KBM-7 (cell line): ENCODE measurements at regions of chr12 and their contacts with region 1.

Region 1: DNA sequence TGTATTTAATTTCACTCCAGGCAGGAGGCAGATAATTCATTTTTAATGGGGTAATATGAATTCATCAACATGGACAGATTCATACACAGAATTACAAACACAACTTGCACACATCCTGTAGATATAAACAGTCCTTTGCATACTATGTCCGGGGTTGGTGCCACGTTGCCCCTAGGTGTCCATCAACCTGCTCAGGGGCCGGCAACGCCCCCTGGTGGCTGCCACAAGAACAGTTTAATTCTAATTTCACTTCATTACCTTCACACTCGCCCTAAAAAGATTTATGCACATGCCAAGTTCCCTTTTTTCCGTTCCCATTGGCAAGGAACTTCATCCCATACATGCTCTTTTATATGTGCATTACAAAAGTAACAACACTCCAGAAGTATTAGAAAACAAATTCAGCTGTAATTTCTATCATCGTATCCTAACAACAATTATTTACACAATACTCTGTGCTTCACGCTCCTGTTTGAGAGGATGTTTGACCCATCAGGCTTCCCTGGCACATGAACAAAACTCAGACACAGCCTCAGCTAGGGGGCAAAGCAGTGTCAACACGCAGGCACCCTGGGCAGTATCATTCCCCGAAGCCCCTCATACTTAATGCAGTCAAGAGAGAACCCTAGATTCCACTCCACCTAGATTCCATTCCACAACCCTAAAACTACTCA is 15.5 kb downstream of the MANSC1 start:
- DNase-seq: peak; percentile 75

Region 2: GRCh38 chr12:11553871-11554533 is 780.5 kb before region 1 on chr12:
- in situ Hi-C with region 1: loop called (anchors 25 kb)
- DNase-seq: peak; percentile 79

Region 3: GRCh38 chr12:12081836-12082497 is 252.5 kb before region 1 on chr12:
- in situ Hi-C with region 1: loop called (anchors 25 kb)
- DNase-seq: peak; percentile 54

Region 4: GRCh38 chr12:12606781-12607589 is 272.5 kb after region 1 on chr12:
- in situ Hi-C with region 1: no loop called
- DNase-seq: no peak